HAP-1 (cell line): ENCODE measurements at regions of chr3 and their contacts with region 1.

Region 1: DNA sequence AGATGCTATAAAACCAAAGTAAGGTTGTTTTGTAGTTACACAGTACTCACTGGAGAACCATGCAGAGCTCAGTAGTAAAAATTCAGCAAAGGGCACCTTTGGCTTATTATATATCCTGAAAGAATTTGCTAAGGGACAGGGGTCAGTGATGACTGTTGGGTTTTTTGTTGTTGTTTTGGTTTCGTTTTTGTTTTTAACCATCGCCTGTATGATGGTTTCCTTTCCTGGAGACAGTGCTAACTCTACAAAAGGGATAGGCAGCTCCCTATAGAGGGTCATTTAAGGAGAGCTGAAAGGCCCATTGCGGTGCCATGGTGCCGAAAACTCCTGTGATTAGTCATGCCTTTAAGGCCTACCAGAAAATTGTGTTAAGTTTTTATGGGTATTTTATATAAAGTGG is 118.2 kb upstream of the GOLIM4 start:
- DNase-seq: no peak
- H3K4me3 ChIP-seq: no peak overlapping the region
- H3K4me1 ChIP-seq: peaks cover 46% of the 10 kb centered on the region
- H3K27me3 ChIP-seq: no peaks in the 10 kb centered on the region

Region 2: DNA sequence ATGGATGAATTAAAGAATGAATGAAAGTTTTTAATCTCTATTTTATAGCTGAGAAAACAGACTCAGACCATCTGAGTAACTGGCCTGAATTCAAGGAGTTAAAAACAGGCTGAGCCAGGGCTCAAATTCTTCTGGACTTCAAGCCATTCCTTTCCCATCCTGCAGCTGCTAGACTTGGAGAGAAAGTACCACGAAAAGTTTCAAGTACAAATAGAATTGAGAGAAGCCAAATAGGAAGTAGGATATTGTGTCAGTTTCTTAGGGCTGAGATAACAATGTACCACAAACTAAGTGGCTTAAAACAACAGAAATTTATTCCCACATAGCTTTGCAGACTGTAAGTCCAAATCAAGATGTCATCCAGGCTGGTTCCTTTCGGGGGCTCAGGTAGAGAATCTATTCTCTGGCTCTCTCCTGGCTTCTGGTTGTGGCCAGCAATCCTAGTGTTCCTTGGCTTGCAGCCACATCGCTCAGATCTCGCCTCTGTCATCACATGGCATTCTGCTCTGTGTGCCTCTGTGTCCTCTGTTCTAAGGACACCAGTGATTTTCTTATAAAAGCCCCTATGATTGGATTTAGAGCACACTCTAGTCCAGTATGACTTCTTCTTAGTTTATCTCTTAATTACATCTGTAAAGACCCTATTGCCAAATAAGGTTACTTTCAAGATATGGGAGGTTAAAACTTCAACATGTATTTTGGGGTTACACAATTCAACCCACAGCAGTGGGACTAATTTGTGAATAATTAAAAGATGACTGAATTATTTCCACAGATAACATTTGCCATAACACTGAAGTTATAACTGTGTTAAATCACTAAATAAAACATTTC is 92.5 kb before region 1 on chr3:
- in situ Hi-C with region 1: no loop called
- DNase-seq: no peak
- H3K4me3 ChIP-seq: no peak overlapping the region
- H3K4me1 ChIP-seq: peaks cover 24% of the 10 kb centered on the region
- H3K27me3 ChIP-seq: no peaks in the 10 kb centered on the region

Region 3: DNA sequence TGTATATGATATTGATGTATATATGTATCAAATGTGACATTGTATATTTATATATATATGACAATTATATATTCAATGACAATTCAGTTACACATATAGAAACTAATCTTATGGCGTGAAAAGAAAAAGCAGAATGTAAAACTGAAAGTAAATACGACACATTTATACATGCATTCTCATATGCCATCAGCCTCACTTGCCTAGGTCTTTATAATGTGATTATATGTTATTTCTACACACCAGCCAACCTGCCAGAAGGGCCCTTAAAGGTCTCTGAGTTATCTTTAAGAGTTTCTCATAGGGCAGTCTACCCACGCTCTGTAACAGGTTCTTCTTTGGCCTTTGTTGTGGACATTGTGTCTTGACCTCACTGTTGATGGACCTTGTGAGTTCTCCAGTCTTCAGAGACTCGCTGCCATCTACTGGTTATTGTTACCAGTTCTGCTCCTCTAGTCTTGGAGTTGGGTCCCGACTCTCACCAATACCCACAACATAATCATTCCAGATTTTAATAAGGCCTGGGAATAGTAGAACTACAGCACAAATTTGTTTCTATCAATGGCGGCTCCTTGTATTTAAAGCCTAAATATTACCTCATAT is 253.3 kb after region 1 on chr3:
- in situ Hi-C with region 1: loop called (anchors 25 kb)
- DNase-seq: peak in 1 of 2 experiments; percentile 28
- H3K4me3 ChIP-seq: no peak overlapping the region
- H3K4me1 ChIP-seq: peaks cover 20% of the 10 kb centered on the region
- H3K27me3 ChIP-seq: no peaks in the 10 kb centered on the region

Region 4: DNA sequence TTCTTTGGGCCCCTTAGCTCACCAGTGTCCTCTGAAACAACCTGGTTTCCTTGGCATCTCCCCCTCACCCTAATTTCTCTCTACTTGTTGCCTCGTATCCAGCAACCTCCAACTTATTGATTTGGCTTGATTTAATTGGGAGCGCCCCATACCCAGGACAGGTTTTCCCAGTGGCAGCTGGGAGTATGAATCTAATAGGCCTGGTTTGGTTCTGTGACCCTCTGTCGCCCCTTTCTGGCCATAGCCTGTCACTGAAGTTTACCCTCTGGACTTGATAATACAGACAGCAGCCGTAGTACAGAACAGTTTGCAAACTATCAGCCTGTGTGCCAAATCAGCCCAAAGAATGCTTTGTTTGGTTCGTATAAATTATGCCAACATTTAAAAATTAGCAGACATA is 406.9 kb after region 1 on chr3:
- in situ Hi-C with region 1: loop called (anchors 25 kb)
- DNase-seq: peak; percentile 69 to 80
- H3K4me3 ChIP-seq: no peak overlapping the region
- H3K4me1 ChIP-seq: peaks cover 71% of the 10 kb centered on the region
- H3K27me3 ChIP-seq: no peaks in the 10 kb centered on the region

Region 5: GRCh38 chr3:168847291-168847883 is 633.5 kb after region 1 on chr3:
- in situ Hi-C with region 1: loop called (anchors 10 kb)
- DNase-seq: peak; percentile 48 to 61
- H3K4me3 ChIP-seq: no peak overlapping the region
- H3K4me1 ChIP-seq: peaks cover 20% of the 10 kb centered on the region
- H3K27me3 ChIP-seq: no peaks in the 10 kb centered on the region